Activated B cell treated with CpG ODN at 0.5 μM for 24 hours (primary cell): ENCODE measurements at regions of chr1 and their contacts with region 1.

Region 1: GRCh38 chr1:15741183-15741850 is 982 bp upstream of the TMEM82 start:
- DNase-seq: peak; percentile 66
- ATAC-seq: peak; percentile 94
- H3K4me3 Mint-ChIP-seq: no peak overlapping the region
- H3K27ac Mint-ChIP-seq: no peak overlapping the region
- H3K4me1 Mint-ChIP-seq: peaks cover 6% of the 10 kb centered on the region
- H3K27me3 Mint-ChIP-seq: no peaks in the 10 kb centered on the region
- CTCF ChIP-seq: no peak

Region 2: DNA sequence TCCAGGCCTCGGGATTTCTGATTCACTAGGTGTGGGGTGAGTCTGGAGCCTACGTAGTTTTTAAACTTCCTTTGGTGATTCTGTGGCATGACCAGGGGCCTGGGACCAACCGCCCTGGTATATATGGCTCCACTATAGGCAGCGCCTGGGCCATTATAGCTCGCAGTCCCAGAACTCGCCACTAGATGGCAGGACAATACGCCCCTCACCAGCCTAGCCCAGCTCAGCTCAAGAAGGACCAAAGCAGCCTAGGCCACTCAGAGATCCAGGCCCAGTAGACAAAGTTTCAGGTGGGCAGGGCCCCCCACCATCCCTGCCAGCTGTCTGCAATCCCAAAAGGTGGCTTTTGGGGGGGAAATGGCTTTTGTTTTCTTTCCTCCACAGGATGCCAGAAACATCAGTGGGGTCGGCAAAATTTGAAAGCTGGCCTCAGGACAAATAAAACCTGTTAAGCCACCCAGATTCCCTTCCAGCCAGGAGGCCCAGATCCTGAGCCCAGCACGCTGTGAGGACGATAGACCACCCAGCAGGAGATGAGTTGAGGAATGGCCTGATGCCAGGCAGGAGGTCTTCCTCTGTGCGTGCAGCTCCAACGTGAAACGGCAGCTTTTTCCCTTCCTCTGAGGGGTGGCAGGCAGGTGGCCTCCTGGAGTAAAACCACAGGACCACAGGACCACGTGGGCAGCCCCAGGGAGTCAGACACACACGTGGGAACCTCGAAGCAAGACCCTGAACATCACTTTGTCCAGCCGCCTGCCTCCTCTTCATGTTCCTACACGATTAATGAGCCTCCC is 612.6 kb before region 1 on chr1:
- CTCF ChIA-PET with region 1: no interaction called
- POLR2A ChIA-PET with region 1: no interaction called
- intact Hi-C with region 1: loop called (anchors 5 kb)
- DNase-seq: peak; percentile 52
- ATAC-seq: peak; percentile 80
- H3K4me3 Mint-ChIP-seq: no peak overlapping the region
- H3K27ac Mint-ChIP-seq: no peak overlapping the region
- H3K4me1 Mint-ChIP-seq: no peaks in the 10 kb centered on the region
- H3K27me3 Mint-ChIP-seq: peaks cover 9% of the 10 kb centered on the region
- CTCF ChIP-seq: peak; percentile 49

Region 3: DNA sequence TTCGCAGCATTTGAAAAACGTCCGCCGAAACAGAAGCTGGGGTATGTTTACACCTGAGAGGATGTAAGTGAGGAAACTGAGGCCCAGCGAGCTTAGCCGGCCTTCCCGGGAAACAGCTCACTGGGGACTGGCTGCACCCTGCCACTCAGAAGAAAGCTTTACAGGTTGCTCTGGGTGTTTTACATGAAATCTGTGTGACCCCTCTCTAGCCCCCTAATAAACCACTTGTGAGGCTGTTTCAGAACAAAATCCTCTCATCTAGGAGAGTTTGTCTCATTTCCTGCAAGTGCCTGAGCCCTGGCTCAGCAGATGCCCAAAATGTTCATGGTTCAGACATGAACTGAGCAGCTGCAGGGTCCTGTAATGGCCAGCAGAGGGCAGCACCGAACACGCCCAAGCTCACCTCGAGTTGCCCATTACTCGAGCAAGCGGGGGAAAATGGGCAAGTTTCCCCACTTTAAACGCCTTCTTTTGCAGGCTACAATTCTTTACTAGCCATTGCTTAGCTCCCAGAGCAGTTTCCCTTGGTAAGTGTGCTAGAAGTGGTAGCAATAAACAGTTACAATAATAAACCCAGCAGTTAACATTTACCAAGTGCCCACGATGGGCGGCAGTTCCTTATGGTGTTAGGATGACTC is 417.8 kb before region 1 on chr1:
- CTCF ChIA-PET with region 1: interaction called, 5 read pairs
- POLR2A ChIA-PET with region 1: no interaction called
- intact Hi-C with region 1: loop called (anchors 2 kb)
- DNase-seq: peak; percentile 46
- ATAC-seq: peak; percentile 87
- H3K4me3 Mint-ChIP-seq: no peak overlapping the region
- H3K27ac Mint-ChIP-seq: no peak overlapping the region
- H3K4me1 Mint-ChIP-seq: no peaks in the 10 kb centered on the region
- H3K27me3 Mint-ChIP-seq: peaks cover 8% of the 10 kb centered on the region
- CTCF ChIP-seq: no peak

Region 4: GRCh38 chr1:15476927-15477326 is 264.4 kb before region 1 on chr1:
- CTCF ChIA-PET with region 1: no interaction called
- POLR2A ChIA-PET with region 1: no interaction called
- intact Hi-C with region 1: no loop called
- DNase-seq: no peak
- ATAC-seq: no peak
- H3K4me3 Mint-ChIP-seq: no peak overlapping the region
- H3K27ac Mint-ChIP-seq: no peak overlapping the region
- H3K4me1 Mint-ChIP-seq: no peaks in the 10 kb centered on the region
- H3K27me3 Mint-ChIP-seq: no peaks in the 10 kb centered on the region
- CTCF ChIP-seq: no peak

Region 5: DNA sequence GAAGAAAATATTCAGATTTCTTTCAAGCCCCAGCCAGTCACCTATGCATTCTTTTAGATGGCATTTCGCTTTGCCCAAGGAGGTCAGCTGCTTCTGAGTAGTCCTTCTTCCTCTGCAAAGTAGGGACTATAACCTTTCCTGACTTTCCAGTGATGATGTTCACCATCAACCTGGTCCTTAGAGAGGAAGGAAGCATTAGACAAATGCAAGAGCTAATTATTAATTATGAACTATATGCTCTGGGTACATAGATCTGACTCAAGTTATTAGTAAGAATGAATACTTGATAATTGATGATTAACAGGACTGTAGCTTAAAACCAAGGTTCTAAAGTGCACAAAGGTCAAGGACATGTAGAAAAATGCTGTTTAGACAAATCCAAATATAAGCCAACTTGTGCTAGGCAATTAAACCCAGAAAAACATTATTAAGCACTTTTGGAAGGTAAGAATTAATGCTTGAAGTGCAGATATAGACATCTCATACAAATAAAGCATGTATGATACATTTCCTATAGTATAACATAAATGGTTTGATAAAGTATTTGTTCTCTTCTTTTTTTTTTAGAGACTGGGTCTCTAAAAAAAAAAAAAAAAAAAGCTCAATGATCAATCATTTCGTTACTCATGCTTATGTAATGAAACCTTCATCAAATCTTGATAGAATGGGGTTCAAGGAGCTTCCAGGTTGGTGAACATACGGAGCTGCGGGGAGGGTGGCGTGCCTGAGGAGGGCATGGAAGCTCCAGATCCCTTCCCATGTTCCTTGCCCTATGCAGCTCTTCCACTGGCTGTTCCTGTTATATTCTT is 145.3 kb before region 1 on chr1:
- CTCF ChIA-PET with region 1: interaction called, 11 read pairs
- POLR2A ChIA-PET with region 1: no interaction called
- intact Hi-C with region 1: loop called (anchors 1 kb)
- DNase-seq: no peak
- ATAC-seq: no peak
- H3K4me3 Mint-ChIP-seq: no peak overlapping the region
- H3K27ac Mint-ChIP-seq: no peak overlapping the region
- H3K4me1 Mint-ChIP-seq: no peaks in the 10 kb centered on the region
- H3K27me3 Mint-ChIP-seq: no peaks in the 10 kb centered on the region
- CTCF ChIP-seq: no peak

Region 6: DNA sequence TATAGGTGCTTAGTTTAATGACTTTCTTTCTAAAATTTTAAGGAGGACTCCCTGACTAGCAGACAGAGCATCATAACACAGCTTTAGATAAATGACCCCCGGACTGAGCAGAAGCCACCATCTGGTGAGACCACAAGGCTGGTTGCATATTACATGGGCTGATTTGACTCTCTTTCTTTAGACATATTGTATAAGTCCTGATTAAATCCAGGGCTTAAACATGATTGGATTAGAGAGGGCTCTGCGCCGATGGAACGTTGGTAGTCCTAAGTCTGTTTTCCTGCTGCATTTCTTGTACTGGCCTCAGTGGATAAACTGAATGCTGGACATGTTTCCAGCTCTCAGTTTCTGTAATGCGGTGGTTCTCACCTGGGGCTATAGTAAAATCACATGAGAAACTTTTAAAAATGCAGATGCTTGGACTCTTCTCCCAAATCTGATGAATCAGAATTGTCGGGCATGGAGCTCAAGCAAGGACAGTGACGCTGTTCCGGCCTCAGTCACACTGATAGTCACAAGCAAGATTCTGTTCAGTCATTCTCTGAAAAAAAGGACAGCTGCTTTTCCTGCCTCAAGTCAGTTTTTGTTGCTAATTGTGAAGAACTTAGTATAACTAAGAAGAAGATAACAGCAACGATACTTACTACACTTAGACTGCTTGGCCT is 107.4 kb before region 1 on chr1:
- CTCF ChIA-PET with region 1: no interaction called
- POLR2A ChIA-PET with region 1: interaction called, 6 read pairs
- intact Hi-C with region 1: loop called (anchors 10 kb)
- DNase-seq: no peak
- ATAC-seq: no peak
- H3K4me3 Mint-ChIP-seq: no peak overlapping the region
- H3K27ac Mint-ChIP-seq: no peak overlapping the region
- H3K4me1 Mint-ChIP-seq: no peaks in the 10 kb centered on the region
- H3K27me3 Mint-ChIP-seq: no peaks in the 10 kb centered on the region
- CTCF ChIP-seq: no peak

Region 7: GRCh38 chr1:15656464-15656863 is 84.9 kb before region 1 on chr1:
- CTCF ChIA-PET with region 1: interaction called, 4 read pairs
- POLR2A ChIA-PET with region 1: no interaction called
- intact Hi-C with region 1: loop called (anchors 5 kb)
- DNase-seq: no peak
- ATAC-seq: no peak
- H3K4me3 Mint-ChIP-seq: no peak overlapping the region
- H3K27ac Mint-ChIP-seq: no peak overlapping the region
- H3K4me1 Mint-ChIP-seq: peaks cover 3% of the 10 kb centered on the region
- H3K27me3 Mint-ChIP-seq: no peaks in the 10 kb centered on the region
- CTCF ChIP-seq: no peak

Region 8: DNA sequence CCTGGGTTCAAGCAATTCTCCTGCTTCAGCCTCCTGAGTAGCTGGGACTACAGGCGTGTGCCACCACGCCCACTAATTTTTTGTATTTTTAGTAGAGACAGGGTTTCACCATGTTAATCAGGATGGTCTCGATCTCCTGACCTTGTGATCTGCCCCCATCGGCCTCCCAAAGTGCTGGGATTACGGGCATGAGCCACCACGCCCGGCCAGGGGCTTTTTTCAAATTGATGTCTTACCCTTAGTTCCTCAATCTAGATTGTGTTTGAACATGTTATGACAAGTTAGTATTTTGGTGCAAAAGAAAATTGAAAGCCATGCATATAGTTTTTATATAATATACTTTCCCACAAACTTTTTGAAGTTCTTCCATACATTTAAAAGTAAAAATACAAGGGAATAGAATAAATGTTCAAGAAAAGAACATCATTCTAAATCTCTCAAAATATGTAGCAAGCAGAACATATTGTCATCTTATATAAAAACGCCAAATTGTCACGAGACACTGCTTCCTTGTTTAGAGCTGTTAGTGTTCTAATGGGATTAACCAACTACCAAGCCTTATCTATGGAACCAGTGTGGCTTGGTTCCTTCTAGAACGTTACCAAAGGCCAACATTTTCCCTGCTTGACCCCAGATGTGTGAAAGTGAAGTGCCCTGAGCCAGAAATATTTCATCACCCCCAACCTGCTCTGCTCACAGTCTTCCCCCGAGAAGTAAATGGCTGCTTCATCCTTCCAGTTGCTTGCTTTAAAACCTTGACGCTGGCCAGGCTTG is 66.7 kb before region 1 on chr1:
- CTCF ChIA-PET with region 1: no interaction called
- POLR2A ChIA-PET with region 1: no interaction called
- intact Hi-C with region 1: no loop called
- DNase-seq: no peak
- ATAC-seq: no peak
- H3K4me3 Mint-ChIP-seq: no peak overlapping the region
- H3K27ac Mint-ChIP-seq: no peak overlapping the region
- H3K4me1 Mint-ChIP-seq: peaks cover 21% of the 10 kb centered on the region
- H3K27me3 Mint-ChIP-seq: no peaks in the 10 kb centered on the region
- CTCF ChIP-seq: no peak

Region 9: DNA sequence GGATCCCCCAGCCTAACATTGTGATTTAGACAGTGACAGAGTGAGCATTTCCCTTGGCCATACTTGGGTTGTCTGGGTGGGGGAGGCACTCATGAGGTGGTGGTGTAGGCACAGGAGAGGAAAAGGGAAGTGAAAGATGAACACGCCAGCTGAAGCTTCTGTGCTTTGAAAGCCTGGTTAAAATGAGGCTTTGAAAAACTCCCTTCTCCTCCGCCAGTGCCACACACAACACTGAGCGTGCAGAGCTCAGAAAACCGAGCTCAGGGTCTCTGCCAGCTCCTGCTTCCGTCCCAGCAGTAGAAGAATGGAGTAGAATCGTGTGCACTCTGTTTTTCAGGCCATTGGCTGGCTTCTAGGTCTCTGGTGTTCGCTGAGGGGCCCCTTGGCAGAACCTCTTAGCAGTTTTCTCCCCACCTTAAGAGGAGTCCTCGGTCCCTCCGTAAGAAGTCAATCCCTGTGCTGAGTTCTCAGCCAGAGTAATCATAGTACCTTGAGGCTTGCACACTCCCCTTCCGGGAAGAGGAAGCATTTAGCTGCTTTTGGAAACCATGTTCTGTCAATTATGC is 44.3 kb before region 1 on chr1:
- CTCF ChIA-PET with region 1: no interaction called
- POLR2A ChIA-PET with region 1: no interaction called
- intact Hi-C with region 1: loop called (anchors 5 kb)
- DNase-seq: peak; percentile 60
- ATAC-seq: peak; percentile 92
- H3K4me3 Mint-ChIP-seq: peak overlapping the region; percentile 81
- H3K27ac Mint-ChIP-seq: peak overlapping the region; percentile 97
- H3K4me1 Mint-ChIP-seq: peaks cover 75% of the 10 kb centered on the region
- H3K27me3 Mint-ChIP-seq: no peaks in the 10 kb centered on the region
- CTCF ChIP-seq: no peak

Region 10: DNA sequence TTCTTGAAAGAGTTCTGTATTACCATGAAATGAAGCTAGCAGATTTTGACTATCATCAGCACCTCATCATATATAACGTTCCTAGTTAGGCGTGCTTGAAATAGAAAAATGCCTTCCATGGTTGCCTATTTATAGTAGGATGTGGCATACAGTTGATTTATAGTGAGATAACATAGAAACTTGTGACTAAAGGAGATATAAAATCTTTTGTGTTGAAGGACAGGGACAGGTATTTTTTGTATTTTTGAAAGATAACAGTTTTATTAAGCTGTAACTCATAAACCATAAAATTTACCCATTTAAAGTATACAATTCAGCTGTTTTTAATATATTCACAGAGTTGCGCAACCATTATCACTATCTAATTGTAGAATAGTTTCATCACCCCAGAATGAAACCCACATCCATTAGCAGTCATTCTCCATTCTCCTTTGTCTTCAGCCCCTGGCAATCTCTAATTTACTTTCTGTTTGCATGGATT is 125.4 kb after region 1 on chr1:
- CTCF ChIA-PET with region 1: no interaction called
- POLR2A ChIA-PET with region 1: no interaction called
- intact Hi-C with region 1: no loop called
- DNase-seq: no peak
- ATAC-seq: no peak
- H3K4me3 Mint-ChIP-seq: no peak overlapping the region
- H3K27ac Mint-ChIP-seq: no peak overlapping the region
- H3K4me1 Mint-ChIP-seq: peaks cover 54% of the 10 kb centered on the region
- H3K27me3 Mint-ChIP-seq: no peaks in the 10 kb centered on the region
- CTCF ChIP-seq: no peak

Region 11: DNA sequence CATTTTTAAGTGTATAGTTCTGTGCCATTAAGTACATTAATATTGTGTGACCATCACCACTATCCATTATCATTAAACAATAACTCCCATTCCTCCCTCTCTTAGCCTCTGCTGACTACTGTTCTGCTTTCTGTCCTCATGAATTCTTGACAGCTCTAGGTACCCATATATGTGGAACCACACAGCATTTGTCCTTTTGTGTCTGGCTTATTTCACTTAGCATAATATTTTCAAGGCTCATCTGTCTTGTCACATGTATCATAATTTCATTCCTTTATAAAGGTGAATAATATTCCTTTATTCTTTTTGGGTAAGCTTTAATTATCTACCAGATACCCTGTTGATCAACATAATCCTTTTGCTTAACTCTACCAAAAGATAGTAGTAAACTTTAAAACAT is 153.9 kb after region 1 on chr1:
- CTCF ChIA-PET with region 1: no interaction called
- POLR2A ChIA-PET with region 1: no interaction called
- intact Hi-C with region 1: no loop called
- DNase-seq: no peak
- ATAC-seq: no peak
- H3K4me3 Mint-ChIP-seq: no peak overlapping the region
- H3K27ac Mint-ChIP-seq: peak overlapping the region; percentile 32
- H3K4me1 Mint-ChIP-seq: peaks cover 38% of the 10 kb centered on the region
- H3K27me3 Mint-ChIP-seq: no peaks in the 10 kb centered on the region
- CTCF ChIP-seq: no peak